ENCODE measurements at regions of chr1 and their contacts with region 1.

Region 1: GRCh38 chr1:47192458-47193384 is 2.9 kb upstream of the PDZK1IP1 start:
- DNase-seq: peak; percentile 62 to 64
- ATAC-seq: peak; percentile 47 to 61; a peak in 3 of 6 replicates
- H3K4me3 ChIP-seq: 0 out of 3 replicates have a peak overlapping the region, but pooled peaks have one; percentile 25
- H3K27ac ChIP-seq: peak overlapping the region; percentile 85 to 92
- H3K4me1 ChIP-seq: peaks cover 39% of the 10 kb centered on the region
- CTCF ChIP-seq: peak; percentile 74
- EP300 ChIP-seq: no peak
- POLR2A ChIP-seq: no peak
- RAD21 ChIP-seq: peak; percentile 58 to 73

Region 2: DNA sequence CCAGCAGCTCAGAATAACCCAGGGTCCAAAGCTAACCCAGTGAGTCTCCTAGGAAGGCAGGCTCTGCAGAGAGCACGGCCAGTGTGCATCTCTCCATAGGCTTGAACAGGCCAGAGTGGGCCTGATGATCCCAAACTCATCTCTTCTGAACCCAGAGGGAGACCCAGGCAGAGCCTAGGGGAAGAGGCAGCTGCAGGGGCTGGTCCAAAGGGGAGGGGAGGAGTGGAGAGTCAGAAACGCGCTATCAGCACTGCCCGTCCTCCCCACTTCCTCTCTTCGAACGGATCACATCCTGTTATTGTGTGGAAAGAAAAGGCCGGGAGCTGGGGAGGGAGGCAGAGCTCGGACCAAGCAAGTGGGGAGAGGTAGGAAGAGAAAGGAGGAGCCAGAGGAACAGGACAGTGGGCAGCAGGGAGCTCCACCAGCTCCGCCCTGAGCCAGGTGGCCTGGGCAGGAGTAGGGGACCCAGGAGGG is 19.1 kb after region 1 on chr1:
- CTCF ChIA-PET with region 1: interaction called, 14 read pairs
- POLR2A ChIA-PET with region 1: no interaction called
- DNase-seq: no peak
- ATAC-seq: no peak
- H3K4me3 ChIP-seq: no peak overlapping the region
- H3K27ac ChIP-seq: no peak overlapping the region
- H3K4me1 ChIP-seq: no peaks in the 10 kb centered on the region
- CTCF ChIP-seq: no peak
- EP300 ChIP-seq: no peak
- POLR2A ChIP-seq: no peak
- RAD21 ChIP-seq: no peak

Region 3: GRCh38 chr1:47257224-47257623 is 64.5 kb after region 1 on chr1:
- CTCF ChIA-PET with region 1: interaction called, 75 read pairs
- POLR2A ChIA-PET with region 1: no interaction called
- DNase-seq: no peak
- ATAC-seq: no peak
- H3K4me3 ChIP-seq: no peak overlapping the region
- H3K27ac ChIP-seq: no peak overlapping the region
- H3K4me1 ChIP-seq: peaks cover 6% of the 10 kb centered on the region; the same call in 1 of the 3 replicates
- CTCF ChIP-seq: no peak
- EP300 ChIP-seq: no peak
- POLR2A ChIP-seq: no peak
- RAD21 ChIP-seq: no peak

Region 4: GRCh38 chr1:47262787-47263413 is 70.2 kb after region 1 on chr1:
- CTCF ChIA-PET with region 1: interaction called, 75 read pairs
- POLR2A ChIA-PET with region 1: no interaction called
- DNase-seq: peak; percentile 48 to 50
- ATAC-seq: peak; percentile 56 to 73; a peak in 4 of 6 replicates
- H3K4me3 ChIP-seq: no peak overlapping the region
- H3K27ac ChIP-seq: no peak overlapping the region
- H3K4me1 ChIP-seq: no peaks in the 10 kb centered on the region
- CTCF ChIP-seq: peak; percentile 65
- EP300 ChIP-seq: no peak
- POLR2A ChIP-seq: no peak
- RAD21 ChIP-seq: peak; percentile 53 to 55